A673 (cell line): ENCODE measurements at regions of chr7 and their contacts with region 1.

Region 1: GRCh38 chr7:16564909-16565426 is 38.3 kb downstream of the LRRC72 start:
- DNase-seq: peak; percentile 64
- H3K4me3 ChIP-seq: no peak overlapping the region
- H3K27ac ChIP-seq: no peak overlapping the region
- H3K4me1 ChIP-seq: peaks cover 22% of the 10 kb centered on the region
- H3K27me3 ChIP-seq: no peaks in the 10 kb centered on the region
- CTCF ChIP-seq: peak; percentile 81

Region 2: DNA sequence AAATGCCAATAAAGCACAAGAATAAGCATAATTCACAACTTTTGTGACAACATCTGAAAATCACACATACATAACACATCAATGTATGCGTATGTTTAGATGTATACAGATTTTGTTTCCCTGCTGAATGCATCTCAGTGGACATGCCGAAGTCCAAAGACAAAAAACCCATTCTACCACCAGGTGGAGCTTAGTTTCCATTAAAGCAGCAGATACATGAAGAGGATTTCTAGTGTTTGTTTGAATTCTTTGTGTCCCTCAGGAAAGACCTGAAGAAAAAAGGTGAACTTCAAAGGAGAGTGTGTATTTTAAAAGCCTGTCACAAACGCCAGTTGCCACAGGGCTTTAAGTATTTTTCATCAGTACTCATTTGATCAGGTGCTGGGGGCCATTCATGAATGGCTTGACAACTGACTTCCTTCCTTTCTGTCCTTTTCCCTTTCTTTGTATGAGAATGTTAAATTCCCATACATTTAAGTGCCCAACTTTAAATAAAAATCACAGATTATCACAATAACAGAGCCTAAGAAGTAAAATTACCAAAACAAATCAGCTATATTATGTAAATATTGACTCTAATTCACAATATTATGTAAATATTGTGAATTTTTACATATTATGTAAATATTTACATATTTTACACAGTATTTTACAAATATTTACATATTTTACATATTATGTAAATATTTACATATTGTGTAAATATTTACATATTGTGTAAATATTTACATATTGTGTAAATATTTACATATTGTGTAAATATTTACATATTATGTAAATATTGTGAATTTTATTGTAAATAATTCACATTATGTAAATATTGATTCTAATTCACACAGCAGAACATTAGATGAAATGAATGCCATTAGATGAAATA is 486.7 kb before region 1 on chr7:
- CTCF ChIA-PET with region 1: interaction called, 8 read pairs
- POLR2A ChIA-PET with region 1: no interaction called
- intact Hi-C with region 1: loop called (anchors 1 kb)
- DNase-seq: peak; percentile 70
- H3K4me3 ChIP-seq: no peak overlapping the region
- H3K27ac ChIP-seq: no peak overlapping the region
- H3K4me1 ChIP-seq: peaks cover 3% of the 10 kb centered on the region
- H3K27me3 ChIP-seq: peaks cover 13% of the 10 kb centered on the region
- CTCF ChIP-seq: peak; percentile 81

Region 3: GRCh38 chr7:16114633-16115032 is 450.3 kb before region 1 on chr7:
- CTCF ChIA-PET with region 1: interaction called, 9 read pairs
- POLR2A ChIA-PET with region 1: no interaction called
- intact Hi-C with region 1: loop called (anchors 2 kb)
- DNase-seq: peak; percentile 48
- H3K4me3 ChIP-seq: no peak overlapping the region
- H3K27ac ChIP-seq: no peak overlapping the region
- H3K4me1 ChIP-seq: no peaks in the 10 kb centered on the region
- H3K27me3 ChIP-seq: peaks cover 5% of the 10 kb centered on the region
- CTCF ChIP-seq: peak; percentile 71

Region 4: DNA sequence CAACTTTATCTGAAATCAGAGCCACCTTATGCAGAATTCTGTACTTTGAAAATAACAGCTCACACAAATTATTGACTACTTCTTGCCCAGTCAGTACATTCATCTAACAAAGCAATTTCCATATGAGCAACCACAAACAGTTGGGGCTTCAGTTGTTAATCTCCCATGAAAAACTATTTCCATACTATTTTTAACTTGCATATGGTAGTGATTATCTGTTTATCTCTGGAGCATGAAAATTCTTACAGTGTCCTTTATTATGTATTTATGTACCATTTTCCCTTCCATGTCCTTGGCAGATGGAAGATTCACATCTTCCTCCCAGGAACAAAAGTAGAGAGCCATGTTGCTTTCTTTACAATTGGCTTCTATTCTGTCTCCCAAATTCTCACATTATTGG is 429.3 kb before region 1 on chr7:
- CTCF ChIA-PET with region 1: interaction called, 10 read pairs
- POLR2A ChIA-PET with region 1: no interaction called
- intact Hi-C with region 1: no loop called
- DNase-seq: peak; percentile 52
- H3K4me3 ChIP-seq: no peak overlapping the region
- H3K27ac ChIP-seq: no peak overlapping the region
- H3K4me1 ChIP-seq: no peaks in the 10 kb centered on the region
- H3K27me3 ChIP-seq: no peaks in the 10 kb centered on the region
- CTCF ChIP-seq: no peak

Region 5: DNA sequence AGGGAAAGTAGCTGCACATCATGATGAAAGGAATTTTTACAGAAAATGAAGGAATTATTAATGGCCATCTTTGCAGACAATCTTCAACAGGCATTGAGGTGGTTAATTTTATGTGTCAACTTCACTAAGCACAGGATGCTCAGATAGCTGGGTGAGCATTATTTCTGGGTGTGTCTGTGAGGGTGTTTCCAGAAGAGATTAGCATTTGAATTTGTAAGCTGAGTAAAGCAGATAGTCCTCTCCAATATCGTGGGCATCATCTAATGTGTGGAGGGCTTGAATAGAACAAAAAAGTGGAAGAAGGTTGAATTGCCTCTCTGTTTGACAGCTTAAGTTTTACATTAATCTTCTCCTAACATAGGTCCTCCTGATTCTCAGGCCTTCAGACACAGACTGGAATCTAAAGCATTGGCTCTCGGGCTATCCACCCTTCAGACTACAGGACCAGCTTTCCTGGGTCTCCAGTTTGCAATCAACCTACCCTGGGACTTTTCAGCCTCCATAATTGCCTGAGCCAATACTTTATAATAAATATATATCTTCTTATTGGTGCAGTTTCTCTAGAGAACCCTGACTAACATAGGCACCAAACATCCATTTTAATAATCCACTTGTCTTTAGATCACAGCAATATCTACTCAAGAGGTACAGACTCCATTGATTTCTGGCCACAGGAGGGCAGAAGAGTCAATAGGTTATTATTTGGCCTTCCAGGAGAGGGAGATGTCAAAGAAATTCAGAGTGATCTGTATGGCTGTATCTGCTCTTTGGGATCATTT is 133.1 kb before region 1 on chr7:
- CTCF ChIA-PET with region 1: interaction called, 13 read pairs
- POLR2A ChIA-PET with region 1: no interaction called
- intact Hi-C with region 1: loop called (anchors 2 kb)
- DNase-seq: peak; percentile 64
- H3K4me3 ChIP-seq: no peak overlapping the region
- H3K27ac ChIP-seq: no peak overlapping the region
- H3K4me1 ChIP-seq: no peaks in the 10 kb centered on the region
- H3K27me3 ChIP-seq: no peaks in the 10 kb centered on the region
- CTCF ChIP-seq: peak; percentile 50

Region 6: GRCh38 chr7:16484453-16485158 is 80.4 kb before region 1 on chr7:
- CTCF ChIA-PET with region 1: no interaction called
- POLR2A ChIA-PET with region 1: no interaction called
- intact Hi-C with region 1: no loop called
- DNase-seq: no peak
- H3K4me3 ChIP-seq: no peak overlapping the region
- H3K27ac ChIP-seq: no peak overlapping the region
- H3K4me1 ChIP-seq: no peaks in the 10 kb centered on the region
- H3K27me3 ChIP-seq: no peaks in the 10 kb centered on the region
- CTCF ChIP-seq: no peak